Psoas muscle (tissue), 8 donors: ENCODE measurements at regions of chr2 and their contacts with region 1.

Region 1: DNA sequence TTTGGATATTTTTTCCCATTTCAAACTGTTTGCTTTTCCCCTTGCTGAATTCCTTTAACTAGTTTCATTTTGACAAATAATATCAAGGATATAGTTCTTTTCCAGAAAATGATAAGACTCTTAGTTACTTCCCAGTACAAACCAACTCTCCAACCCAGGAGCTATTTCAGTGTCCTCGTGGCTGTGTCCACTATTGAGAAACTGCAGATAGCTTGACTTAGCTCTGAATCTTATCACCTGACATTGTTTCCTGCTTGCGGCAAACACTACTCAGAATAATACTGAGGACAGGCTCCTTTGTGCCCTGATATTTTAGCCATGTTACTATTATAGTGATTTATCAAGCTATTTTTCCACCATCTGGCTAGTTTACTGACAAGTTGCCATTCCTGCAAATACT is 74.6 kb downstream of the KLF7 start:
- DNase-seq: no peak
- ATAC-seq: peak; percentile 46 to 91 (median 75)
- H3K4me3 ChIP-seq: no peak overlapping the region
- H3K27ac ChIP-seq: no peak overlapping the region
- H3K4me1 ChIP-seq: peaks cover 27% of the 10 kb centered on the region
- H3K27me3 ChIP-seq: no peaks in the 10 kb centered on the region
- CTCF ChIP-seq: no peak

Region 2: GRCh38 chr2:207149249-207150213 is 58.4 kb after region 1 on chr2:
- intact Hi-C with region 1: loop called in 1 of 2 experiments (anchors 10 kb)
- DNase-seq: no peak
- ATAC-seq: no peak
- H3K4me3 ChIP-seq: no peak overlapping the region
- H3K27ac ChIP-seq: no peak overlapping the region
- H3K4me1 ChIP-seq: peaks cover 53% of the 10 kb centered on the region
- H3K27me3 ChIP-seq: no peaks in the 10 kb centered on the region
- CTCF ChIP-seq: no peak